GM12878 (cell line): ENCODE measurements at regions of chr5 and their contacts with region 1.

Region 1: GRCh38 chr5:67236757-67237156 is 40.2 kb upstream of the CD180 start:
- DNase-seq: no peak
- ATAC-seq: no peak
- H3K4me3 ChIP-seq: no peak overlapping the region
- H3K27ac ChIP-seq: no peak overlapping the region
- H3K4me1 ChIP-seq: no peaks in the 10 kb centered on the region; the same call in 1 of the 2 replicates
- H3K27me3 ChIP-seq: no peaks in the 10 kb centered on the region
- CTCF ChIP-seq: no peak
- EP300 ChIP-seq: no peak
- POLR2A ChIP-seq: no peak
- RAD21 ChIP-seq: no peak

Region 2: GRCh38 chr5:68191112-68191791 is 954.5 kb after region 1 on chr5:
- CTCF ChIA-PET with region 1: no interaction called
- POLR2A ChIA-PET with region 1: interaction called, 11 read pairs
- RAD21 ChIA-PET with region 1: no interaction called
- SMC1A ChIA-PET with region 1: no interaction called
- in situ Hi-C with region 1: no loop called
- intact Hi-C with region 1: no loop called
- DNase-seq: no peak
- ATAC-seq: no peak
- H3K4me3 ChIP-seq: no peak overlapping the region
- H3K27ac ChIP-seq: no peak overlapping the region
- H3K4me1 ChIP-seq: no peaks in the 10 kb centered on the region
- H3K27me3 ChIP-seq: no peaks in the 10 kb centered on the region
- CTCF ChIP-seq: no peak
- EP300 ChIP-seq: no peak
- POLR2A ChIP-seq: no peak
- RAD21 ChIP-seq: no peak